AG04450 (cell line): ENCODE measurements at regions of chr1 and their contacts with region 1.

Region 1: DNA sequence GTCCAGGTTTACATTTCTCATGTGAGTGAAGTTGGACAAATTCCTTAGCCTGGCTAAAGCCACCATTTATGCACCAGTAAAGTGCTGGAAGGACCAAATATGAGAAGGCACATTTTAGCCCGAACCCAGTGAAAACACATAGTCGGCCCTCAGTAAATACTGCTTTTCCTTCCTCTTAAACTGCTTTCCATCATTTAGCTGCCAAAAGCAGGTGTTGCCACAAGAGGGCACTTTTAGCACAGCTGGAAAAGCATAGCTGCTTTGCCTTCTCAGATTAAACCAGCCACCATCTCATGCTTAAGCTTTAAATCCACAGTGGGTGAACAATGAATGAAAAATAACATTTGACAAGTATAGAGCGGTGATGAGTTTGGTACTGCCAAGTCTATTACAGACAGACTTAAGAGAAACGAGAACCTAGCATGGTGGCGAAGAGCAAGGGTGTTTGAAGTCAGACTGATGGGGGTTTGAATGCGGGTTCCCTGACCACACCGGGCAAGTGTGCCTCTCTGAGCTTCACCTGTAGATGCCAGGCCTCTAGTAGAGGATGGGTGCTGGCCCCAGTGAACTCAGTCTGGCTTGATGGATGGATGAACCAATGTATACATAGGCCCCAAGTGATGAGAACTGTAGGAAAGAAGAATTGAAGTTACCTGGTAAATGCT is 57.8 kb downstream of the SLC35D1 start:
- DNase-seq: peak; percentile 55
- H3K4me3 ChIP-seq: no peak overlapping the region
- H3K27ac ChIP-seq: no peak overlapping the region
- H3K27me3 ChIP-seq: no peaks in the 10 kb centered on the region
- CTCF ChIP-seq: peak; percentile 89

Region 2: GRCh38 chr1:66764994-66765578 is 231.1 kb before region 1 on chr1:
- CTCF ChIA-PET with region 1: interaction called, 17 read pairs
- POLR2A ChIA-PET with region 1: interaction called, 3 read pairs
- DNase-seq: peak; percentile 29
- H3K4me3 ChIP-seq: no peak overlapping the region
- H3K27ac ChIP-seq: no peak overlapping the region
- H3K27me3 ChIP-seq: no peaks in the 10 kb centered on the region
- CTCF ChIP-seq: peak; percentile 78

Region 3: DNA sequence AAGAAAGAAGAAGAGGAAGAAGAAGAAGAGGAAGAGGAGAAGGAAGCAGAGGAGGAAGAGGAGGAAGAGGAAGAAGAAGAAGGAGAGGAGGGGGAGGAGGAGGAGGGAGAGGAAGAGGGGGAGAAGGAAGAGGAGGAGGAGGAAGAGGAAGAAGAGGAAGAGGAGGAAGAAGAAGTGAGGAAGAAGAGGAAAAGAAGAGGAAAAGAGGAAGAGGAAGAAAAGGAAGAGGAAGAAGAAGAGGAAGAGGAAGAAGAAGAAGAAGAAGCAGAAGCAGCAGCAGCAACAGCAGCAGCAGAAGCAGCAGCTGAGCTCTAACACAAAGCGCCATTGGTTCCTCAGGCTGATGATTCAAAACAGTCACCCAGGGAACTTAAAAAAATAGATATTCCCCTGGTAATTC is 105.5 kb before region 1 on chr1:
- CTCF ChIA-PET with region 1: no interaction called
- POLR2A ChIA-PET with region 1: no interaction called
- DNase-seq: no peak
- H3K4me3 ChIP-seq: no peak overlapping the region
- H3K27ac ChIP-seq: no peak overlapping the region
- H3K27me3 ChIP-seq: no peaks in the 10 kb centered on the region
- CTCF ChIP-seq: no peak

Region 4: DNA sequence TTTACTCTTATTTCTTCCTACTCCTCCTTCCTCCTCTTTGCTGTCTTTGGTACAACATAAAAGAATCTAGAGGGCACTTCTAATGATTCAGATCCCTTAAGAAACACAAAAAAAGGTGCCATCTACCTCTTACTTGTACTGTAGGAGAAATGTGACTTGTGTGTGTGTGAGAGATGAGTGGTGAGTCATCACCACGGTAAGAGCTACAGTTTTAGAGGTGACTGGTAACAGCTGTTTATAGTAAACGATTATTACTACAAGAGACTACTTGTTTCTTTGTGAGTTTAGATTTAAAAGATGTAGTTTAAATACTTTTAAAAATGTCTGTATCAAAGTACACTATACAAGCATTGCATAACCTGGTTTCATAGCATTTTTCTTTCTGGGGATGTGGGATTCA is 17.4 kb after region 1 on chr1:
- CTCF ChIA-PET with region 1: interaction called, 21 read pairs
- POLR2A ChIA-PET with region 1: no interaction called
- DNase-seq: peak; percentile 68
- H3K4me3 ChIP-seq: no peak overlapping the region
- H3K27ac ChIP-seq: no peak overlapping the region
- H3K27me3 ChIP-seq: no peaks in the 10 kb centered on the region
- CTCF ChIP-seq: no peak

Region 5: DNA sequence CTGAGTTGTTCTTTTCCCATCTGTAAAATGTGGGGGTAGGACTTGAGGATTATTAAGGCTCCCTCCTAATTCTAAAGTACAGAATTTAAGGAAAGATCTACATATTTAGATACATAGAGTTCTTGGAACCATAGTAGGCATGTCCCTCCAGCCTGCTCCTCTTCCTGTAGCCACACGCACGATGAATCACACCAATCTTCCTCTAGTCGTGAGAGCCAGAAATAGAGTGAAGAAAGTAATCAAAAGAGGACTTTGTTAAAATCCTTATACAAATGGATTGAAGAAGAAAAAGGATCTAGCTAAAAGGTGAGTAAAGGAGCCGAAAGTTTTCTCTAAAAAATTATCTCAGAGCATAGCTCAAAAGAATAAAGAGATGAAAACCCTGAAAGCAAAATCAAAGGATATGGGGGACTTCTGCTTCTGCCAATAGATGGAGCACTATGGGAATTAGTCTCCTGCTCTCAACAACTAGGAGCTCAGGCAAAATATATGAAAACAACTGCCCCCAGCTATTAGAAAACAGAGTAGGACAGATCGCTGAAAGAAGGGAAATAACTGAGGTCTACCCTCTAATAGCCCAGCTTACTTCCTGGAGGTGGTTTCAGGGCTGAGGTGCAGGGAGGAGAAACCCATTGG is 130.1 kb after region 1 on chr1:
- CTCF ChIA-PET with region 1: interaction called, 13 read pairs
- POLR2A ChIA-PET with region 1: no interaction called
- DNase-seq: no peak
- H3K4me3 ChIP-seq: no peak overlapping the region
- H3K27ac ChIP-seq: no peak overlapping the region
- H3K27me3 ChIP-seq: no peaks in the 10 kb centered on the region
- CTCF ChIP-seq: peak; percentile 35

Region 6: DNA sequence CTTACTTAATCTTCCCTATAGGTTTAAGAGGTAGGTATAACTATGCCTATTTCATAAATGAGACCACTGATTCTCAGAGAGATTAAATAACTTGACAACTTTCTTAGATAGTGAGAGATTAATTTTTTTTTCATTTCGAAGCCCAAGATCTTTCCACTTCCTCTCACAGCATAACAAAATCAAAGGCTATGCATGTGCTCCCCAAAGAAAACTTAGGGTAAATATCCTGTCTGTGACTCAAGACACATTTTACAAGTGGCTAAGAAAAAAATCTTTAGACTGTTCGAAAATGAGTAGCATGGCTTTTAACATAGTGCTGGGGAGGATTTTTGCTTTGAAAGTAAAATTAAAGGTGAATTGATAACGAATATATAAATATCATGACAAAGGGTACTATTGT is 146.8 kb after region 1 on chr1:
- CTCF ChIA-PET with region 1: interaction called, 325 read pairs
- POLR2A ChIA-PET with region 1: no interaction called
- DNase-seq: no peak
- H3K4me3 ChIP-seq: no peak overlapping the region
- H3K27ac ChIP-seq: no peak overlapping the region
- H3K27me3 ChIP-seq: no peaks in the 10 kb centered on the region
- CTCF ChIP-seq: no peak

Region 7: GRCh38 chr1:67174716-67175284 is 178.7 kb after region 1 on chr1:
- CTCF ChIA-PET with region 1: no interaction called
- POLR2A ChIA-PET with region 1: no interaction called
- DNase-seq: no peak
- H3K4me3 ChIP-seq: no peak overlapping the region
- H3K27ac ChIP-seq: no peak overlapping the region
- H3K27me3 ChIP-seq: peaks cover 5% of the 10 kb centered on the region
- CTCF ChIP-seq: no peak